ENCODE measurements at regions of chr19 and their contacts with region 1.

Region 1: DNA sequence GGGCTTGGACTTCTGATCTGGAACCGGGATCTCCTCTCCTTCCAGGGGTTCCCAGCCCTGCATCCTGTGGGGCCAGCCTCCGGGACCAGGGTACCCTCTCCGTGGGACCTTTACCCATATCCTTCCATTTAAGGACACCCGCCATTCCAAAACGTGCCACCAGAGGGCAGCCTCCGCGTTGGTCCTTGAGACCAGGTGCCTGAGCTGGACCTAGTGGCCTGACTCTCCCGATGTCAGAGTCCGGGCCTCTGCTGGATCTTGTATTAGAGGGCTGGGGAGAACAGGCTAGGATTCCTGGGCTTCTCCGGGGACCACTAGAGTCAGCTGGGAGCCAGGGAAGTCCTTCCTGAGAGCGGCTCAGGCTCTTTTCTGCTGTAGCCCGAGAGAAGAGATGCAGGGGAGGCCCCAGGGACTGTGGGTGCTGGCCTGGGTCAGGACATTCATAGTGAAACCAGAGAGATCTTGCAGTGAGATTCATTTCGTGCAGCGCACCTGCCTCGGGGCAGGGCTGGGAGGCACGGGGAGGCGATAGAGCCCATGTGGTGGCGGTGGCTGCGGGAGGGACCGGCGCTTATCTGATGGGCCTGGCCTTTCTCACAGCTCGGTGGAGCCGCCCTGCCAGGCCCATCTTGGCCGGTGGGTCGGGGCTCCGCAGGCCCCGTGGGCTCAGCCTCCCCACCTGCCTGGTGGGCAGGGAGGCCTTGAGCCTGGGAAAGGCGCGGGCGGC is 9.8 kb upstream of the SLC7A10 start:
- DNase-seq: peak; percentile 61
- ATAC-seq: peak; percentile 99
- H3K4me3 ChIP-seq: peak overlapping the region; percentile 39; the same call in 1 of the 2 replicates
- H3K27ac ChIP-seq: no peak overlapping the region
- H3K4me1 ChIP-seq: peaks cover 11% of the 10 kb centered on the region
- H3K27me3 ChIP-seq: peaks cover 0 to 3% of the 10 kb centered on the region in 2 experiments; a peak in 1 of 4 replicates
- CTCF ChIP-seq: peak; percentile 74 to 91 (median 91)
- EP300 ChIP-seq: peak in 1 of 2 experiments; percentile 63; a peak in 1 of 4 replicates
- POLR2A ChIP-seq: no peak
- RAD21 ChIP-seq: peak; percentile 70

Region 2: GRCh38 chr19:33143897-33144405 is 91.5 kb before region 1 on chr19:
- CTCF ChIA-PET with region 1: no interaction called
- POLR2A ChIA-PET with region 1: no interaction called
- RAD21 ChIA-PET with region 1: no interaction called
- SMC1A ChIA-PET with region 1: no interaction called
- in situ Hi-C with region 1: loop called (anchors 5 kb)
- intact Hi-C with region 1: no loop called
- DNase-seq: no peak
- ATAC-seq: peak; percentile 99
- H3K4me3 ChIP-seq: no peak overlapping the region
- H3K27ac ChIP-seq: no peak overlapping the region
- H3K4me1 ChIP-seq: no peaks in the 10 kb centered on the region
- H3K27me3 ChIP-seq: no peaks in the 10 kb centered on the region
- CTCF ChIP-seq: peak; percentile 91 to 95 (median 94)
- EP300 ChIP-seq: no peak
- POLR2A ChIP-seq: no peak
- RAD21 ChIP-seq: peak; percentile 88

Region 3: DNA sequence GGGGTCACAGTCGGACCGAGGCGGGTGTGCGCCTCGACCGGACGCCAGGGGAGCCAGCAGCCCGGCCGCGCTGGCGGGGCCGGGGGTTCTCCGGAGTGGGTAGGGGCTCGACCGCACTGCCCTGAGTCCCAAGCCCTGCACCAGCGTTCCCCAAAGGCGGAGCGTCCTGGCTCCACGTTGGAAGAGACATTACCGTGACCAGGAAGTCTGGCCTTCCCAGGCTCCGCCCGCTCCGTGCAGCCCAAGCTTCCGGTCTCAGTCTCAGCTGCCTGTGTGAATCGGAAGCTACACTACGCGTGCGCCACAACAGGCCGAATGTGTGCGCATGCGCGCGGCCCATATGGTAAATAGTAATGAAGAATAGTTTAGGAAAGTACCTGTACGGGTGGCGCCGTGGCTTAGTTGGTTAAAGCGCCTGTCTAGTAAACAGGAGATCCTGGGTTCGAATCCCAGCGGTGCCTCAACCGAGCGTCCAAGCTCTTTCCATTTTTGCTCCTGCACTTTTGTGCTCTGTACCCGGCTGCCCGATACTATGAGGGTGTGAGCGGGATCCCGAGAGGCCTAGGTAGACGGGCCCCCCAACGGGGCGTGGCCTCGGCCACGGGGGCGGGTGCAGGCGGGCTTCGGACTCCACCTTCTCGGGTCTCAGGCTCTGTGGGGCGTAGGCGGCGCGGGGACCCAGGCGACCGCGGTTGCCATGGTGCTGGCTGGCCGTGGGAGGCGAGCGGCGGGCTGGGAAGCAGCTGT is 58.6 kb before region 1 on chr19:
- CTCF ChIA-PET with region 1: no interaction called
- POLR2A ChIA-PET with region 1: no interaction called
- RAD21 ChIA-PET with region 1: interaction called, 3 read pairs
- SMC1A ChIA-PET with region 1: interaction called, 4 read pairs
- in situ Hi-C with region 1: loop called (anchors 5 kb)
- intact Hi-C with region 1: no loop called
- DNase-seq: peak; percentile 97
- ATAC-seq: peak; percentile 93
- H3K4me3 ChIP-seq: peak overlapping the region; percentile 81
- H3K27ac ChIP-seq: peak overlapping the region; percentile 92
- H3K4me1 ChIP-seq: peaks cover 12% of the 10 kb centered on the region
- H3K27me3 ChIP-seq: no peaks in the 10 kb centered on the region
- CTCF ChIP-seq: 0 out of 6 replicates have a peak, but pooled peaks of 1 of the 3 experiments have one; percentile 1
- EP300 ChIP-seq: peak in 1 of 2 experiments; percentile 18; a peak in 1 of 4 replicates
- POLR2A ChIP-seq: peak; percentile 99
- RAD21 ChIP-seq: no peak

Region 4: DNA sequence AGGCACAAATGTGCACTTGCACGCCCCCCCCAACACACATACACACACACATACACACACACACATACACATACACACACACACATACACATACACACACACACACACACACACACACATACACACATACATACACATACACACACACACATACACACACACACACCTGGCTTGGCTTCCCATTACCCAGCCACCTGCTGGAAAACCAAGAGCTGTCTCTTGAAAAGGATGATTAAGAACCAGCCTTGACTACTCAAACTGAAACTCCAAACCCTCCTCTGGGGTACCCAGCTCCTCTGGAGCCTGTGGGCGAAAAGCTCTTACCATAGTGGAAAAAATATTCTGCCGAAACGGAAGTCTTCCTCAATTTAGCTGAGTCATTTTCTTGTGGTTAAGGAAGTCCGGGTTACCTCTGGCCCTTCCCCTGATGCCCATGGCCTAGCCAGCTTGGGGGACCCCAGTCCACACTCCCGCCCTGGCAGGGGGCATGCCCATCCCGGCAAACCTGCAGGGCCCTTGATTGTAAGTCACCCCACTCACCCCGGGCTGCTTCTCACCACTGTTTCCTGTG is 45.0 kb after region 1 on chr19:
- CTCF ChIA-PET with region 1: interaction called, 4 read pairs
- POLR2A ChIA-PET with region 1: no interaction called
- RAD21 ChIA-PET with region 1: no interaction called
- SMC1A ChIA-PET with region 1: no interaction called
- in situ Hi-C with region 1: no loop called
- intact Hi-C with region 1: loop called (anchors 2 kb)
- DNase-seq: peak; percentile 86
- ATAC-seq: peak; percentile 93
- H3K4me3 ChIP-seq: no peak overlapping the region
- H3K27ac ChIP-seq: no peak overlapping the region; the same call in 1 of the 2 replicates
- H3K4me1 ChIP-seq: peaks cover 18% of the 10 kb centered on the region
- H3K27me3 ChIP-seq: no peaks in the 10 kb centered on the region; a peak in 1 of 4 replicates
- CTCF ChIP-seq: no peak
- EP300 ChIP-seq: no peak
- POLR2A ChIP-seq: no peak
- RAD21 ChIP-seq: no peak

Region 5: DNA sequence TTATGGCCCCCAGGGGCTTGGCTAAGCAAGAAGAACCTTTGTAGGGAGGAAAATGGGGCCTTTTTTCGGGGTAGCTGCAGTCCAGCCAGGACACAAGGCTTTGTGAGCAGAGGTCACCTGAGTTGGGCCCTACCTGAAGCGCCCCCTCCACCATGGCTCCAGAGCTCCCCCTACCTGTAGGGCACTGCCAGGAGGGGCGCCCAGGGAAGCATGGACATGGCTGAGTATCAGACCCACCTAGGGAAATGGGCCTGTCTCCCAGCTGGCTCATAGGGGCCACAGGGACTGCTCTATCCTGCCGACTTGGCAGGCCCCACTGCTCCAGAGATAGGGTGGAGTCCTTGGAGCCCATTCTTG is 75.9 kb after region 1 on chr19:
- CTCF ChIA-PET with region 1: interaction called, 11 read pairs
- POLR2A ChIA-PET with region 1: no interaction called
- RAD21 ChIA-PET with region 1: no interaction called
- SMC1A ChIA-PET with region 1: no interaction called
- in situ Hi-C with region 1: no loop called
- intact Hi-C with region 1: loop called (anchors 2 kb)
- DNase-seq: no peak
- ATAC-seq: peak; percentile 47
- H3K4me3 ChIP-seq: no peak overlapping the region
- H3K27ac ChIP-seq: no peak overlapping the region
- H3K4me1 ChIP-seq: no peaks in the 10 kb centered on the region
- H3K27me3 ChIP-seq: no peaks in the 10 kb centered on the region; a peak in 1 of 4 replicates
- CTCF ChIP-seq: peak in 2 of 3 experiments; percentile 16 to 38; a peak in 3 of 6 replicates
- EP300 ChIP-seq: no peak
- POLR2A ChIP-seq: no peak
- RAD21 ChIP-seq: no peak

Region 6: GRCh38 chr19:33406521-33407139 is 171.2 kb after region 1 on chr19:
- CTCF ChIA-PET with region 1: interaction called, 46 read pairs
- POLR2A ChIA-PET with region 1: no interaction called
- RAD21 ChIA-PET with region 1: interaction called, 8 read pairs
- SMC1A ChIA-PET with region 1: interaction called, 8 read pairs
- in situ Hi-C with region 1: loop called (anchors 5 kb)
- intact Hi-C with region 1: loop called (anchors 1 kb)
- DNase-seq: no peak
- ATAC-seq: peak; percentile 94
- H3K4me3 ChIP-seq: no peak overlapping the region
- H3K27ac ChIP-seq: no peak overlapping the region
- H3K4me1 ChIP-seq: 0 out of 2 replicates have a peak, but pooled peaks cover 4% of the 10 kb centered on the region
- H3K27me3 ChIP-seq: no peaks in the 10 kb centered on the region
- CTCF ChIP-seq: peak; percentile 87 to 92 (median 87)
- EP300 ChIP-seq: no peak
- POLR2A ChIP-seq: no peak
- RAD21 ChIP-seq: peak; percentile 85

Region 7: GRCh38 chr19:33771384-33772101 is 536.1 kb after region 1 on chr19:
- CTCF ChIA-PET with region 1: no interaction called
- POLR2A ChIA-PET with region 1: no interaction called
- RAD21 ChIA-PET with region 1: no interaction called
- SMC1A ChIA-PET with region 1: no interaction called
- in situ Hi-C with region 1: loop called (anchors 25 kb)
- intact Hi-C with region 1: loop called (anchors 5 kb)
- DNase-seq: no peak
- ATAC-seq: peak; percentile 95
- H3K4me3 ChIP-seq: no peak overlapping the region
- H3K27ac ChIP-seq: no peak overlapping the region
- H3K4me1 ChIP-seq: no peaks in the 10 kb centered on the region
- H3K27me3 ChIP-seq: no peaks in the 10 kb centered on the region; a peak in 1 of 4 replicates
- CTCF ChIP-seq: peak; percentile 70 to 92 (median 77)
- EP300 ChIP-seq: no peak
- POLR2A ChIP-seq: no peak
- RAD21 ChIP-seq: peak; percentile 90